ENCODE measurements at regions of chr12 and their contacts with region 1.

Region 1: GRCh38 chr12:62282057-62282774 is 22.0 kb downstream of the USP15 start:
- DNase-seq: no peak
- H3K4me3 ChIP-seq: no peak overlapping the region
- H3K4me3 Mint-ChIP-seq: peak overlapping the region in 4 of 8 donors; percentile 15 to 66 (median 44)
- H3K27ac ChIP-seq: no peak overlapping the region
- H3K27ac Mint-ChIP-seq: peak overlapping the region in 6 of 7 donors; percentile 6 to 74 (median 45)
- H3K4me1 ChIP-seq: peaks cover 64% of the 10 kb centered on the region
- H3K4me1 Mint-ChIP-seq: peaks cover 55 to 83% (median 66%) of the 10 kb centered on the region in 4 donors
- H3K27me3 ChIP-seq: no peaks in the 10 kb centered on the region
- H3K27me3 Mint-ChIP-seq: no peaks in the 10 kb centered on the region

Region 2: DNA sequence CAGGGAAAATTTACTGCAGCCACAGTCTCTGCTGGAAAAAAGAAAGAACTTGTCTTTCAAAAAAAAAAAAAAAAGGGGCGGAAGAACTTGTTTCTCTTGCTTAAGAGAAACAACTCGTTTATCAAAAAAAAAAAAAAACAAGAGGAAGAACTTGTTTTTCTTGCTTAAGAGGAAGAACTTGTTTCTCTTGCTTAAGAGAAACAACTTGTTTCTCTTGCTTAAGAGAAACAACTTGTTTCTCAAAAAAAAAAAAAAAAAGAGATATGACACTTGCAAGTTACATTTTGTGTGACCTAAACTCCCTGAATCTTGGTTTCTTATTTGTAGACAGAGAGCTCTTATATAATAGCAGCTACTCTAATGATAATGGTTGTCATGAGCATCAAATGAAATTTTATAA is 66.7 kb before region 1 on chr12:
- CTCF ChIA-PET with region 1: no interaction called
- POLR2A ChIA-PET with region 1: no interaction called
- intact Hi-C with region 1: no loop called
- DNase-seq: no peak
- H3K4me3 ChIP-seq: no peak overlapping the region
- H3K4me3 Mint-ChIP-seq: peak overlapping the region in 4 of 8 donors; percentile 6 to 53 (median 30)
- H3K27ac ChIP-seq: no peak overlapping the region
- H3K27ac Mint-ChIP-seq: peak overlapping the region in 6 of 7 donors; percentile 22 to 76 (median 44)
- H3K4me1 ChIP-seq: peaks cover 18% of the 10 kb centered on the region
- H3K4me1 Mint-ChIP-seq: peaks cover 0 to 18% (median 10%) of the 10 kb centered on the region in 4 donors
- H3K27me3 ChIP-seq: no peaks in the 10 kb centered on the region
- H3K27me3 Mint-ChIP-seq: peaks cover 0 to under 1% of the 10 kb centered on the region in 2 donors

Region 3: DNA sequence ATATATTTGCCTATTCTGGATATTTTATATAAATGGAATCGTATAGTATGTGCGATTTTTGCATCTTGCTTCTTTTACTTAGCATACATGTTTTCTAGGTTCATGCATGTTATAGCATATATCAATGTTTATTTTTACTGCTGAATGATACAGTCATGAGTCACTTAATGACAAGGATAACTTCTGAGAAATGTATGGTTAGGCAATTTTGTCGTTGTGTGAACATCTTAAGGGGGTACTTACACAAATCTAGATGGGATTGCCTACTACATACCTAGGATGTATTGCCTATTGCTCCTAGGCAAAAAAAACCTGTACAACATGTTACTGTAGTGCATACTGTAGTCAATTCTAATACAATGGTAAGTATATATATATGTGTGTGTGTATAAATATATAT is 13.3 kb before region 1 on chr12:
- CTCF ChIA-PET with region 1: no interaction called
- POLR2A ChIA-PET with region 1: no interaction called
- intact Hi-C with region 1: loop called (anchors 2 kb)
- DNase-seq: no peak
- H3K4me3 ChIP-seq: no peak overlapping the region
- H3K4me3 Mint-ChIP-seq: peak overlapping the region in 6 of 8 donors; percentile 9 to 76 (median 34)
- H3K27ac ChIP-seq: no peak overlapping the region
- H3K27ac Mint-ChIP-seq: peak overlapping the region in 1 of 7 donors; percentile 63
- H3K4me1 ChIP-seq: peaks cover 97% of the 10 kb centered on the region
- H3K4me1 Mint-ChIP-seq: peaks cover 72 to 93% (median 83%) of the 10 kb centered on the region in 4 donors
- H3K27me3 ChIP-seq: no peaks in the 10 kb centered on the region
- H3K27me3 Mint-ChIP-seq: no peaks in the 10 kb centered on the region

Region 4: DNA sequence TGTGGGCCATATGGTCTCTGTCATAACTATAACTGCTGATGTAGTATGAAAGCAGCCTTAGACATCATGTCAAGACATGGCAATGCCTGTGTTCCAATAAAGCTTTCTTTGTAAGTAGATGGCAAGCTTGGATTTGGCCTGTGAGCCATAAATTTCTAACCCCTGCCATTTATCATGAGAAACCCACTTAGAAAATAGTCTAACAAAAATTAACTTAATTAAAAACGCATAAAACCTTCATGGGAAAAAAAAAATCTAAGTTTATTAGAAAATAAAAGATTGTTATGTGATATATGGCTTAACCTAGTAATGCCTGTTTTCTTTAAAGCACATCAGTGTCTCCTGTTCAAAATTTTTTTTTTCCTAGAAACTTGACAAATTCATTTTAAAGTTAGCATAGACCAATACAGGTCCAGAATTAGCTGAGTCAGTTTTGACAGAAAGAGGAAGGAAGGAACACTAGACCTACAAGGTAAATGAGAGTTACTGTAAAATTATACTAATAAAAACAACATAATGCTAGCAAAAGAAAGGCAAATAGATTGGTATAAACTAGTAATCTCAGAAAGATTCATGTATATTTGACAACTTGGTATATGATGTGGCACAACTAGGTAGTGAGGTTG is 46.2 kb after region 1 on chr12:
- CTCF ChIA-PET with region 1: no interaction called
- POLR2A ChIA-PET with region 1: no interaction called
- intact Hi-C with region 1: loop called (anchors 5 kb)
- DNase-seq: no peak
- H3K4me3 ChIP-seq: no peak overlapping the region
- H3K4me3 Mint-ChIP-seq: no peak overlapping the region
- H3K27ac ChIP-seq: no peak overlapping the region
- H3K27ac Mint-ChIP-seq: no peak overlapping the region
- H3K4me1 ChIP-seq: peaks cover 11% of the 10 kb centered on the region
- H3K4me1 Mint-ChIP-seq: peaks cover 10 to 23% (median 13%) of the 10 kb centered on the region in 4 donors
- H3K27me3 ChIP-seq: no peaks in the 10 kb centered on the region
- H3K27me3 Mint-ChIP-seq: no peaks in the 10 kb centered on the region

Region 5: GRCh38 chr12:62400135-62400534 is 117.9 kb after region 1 on chr12:
- CTCF ChIA-PET with region 1: no interaction called
- POLR2A ChIA-PET with region 1: no interaction called
- intact Hi-C with region 1: no loop called
- DNase-seq: no peak
- H3K4me3 ChIP-seq: no peak overlapping the region
- H3K4me3 Mint-ChIP-seq: no peak overlapping the region
- H3K27ac ChIP-seq: no peak overlapping the region
- H3K27ac Mint-ChIP-seq: no peak overlapping the region
- H3K4me1 ChIP-seq: no peaks in the 10 kb centered on the region
- H3K4me1 Mint-ChIP-seq: peaks cover 3 to 10% (median 4%) of the 10 kb centered on the region in 4 donors
- H3K27me3 ChIP-seq: no peaks in the 10 kb centered on the region
- H3K27me3 Mint-ChIP-seq: no peaks in the 10 kb centered on the region

Measured in CD4-positive, alpha-beta memory T cell (primary cell).